ENCODE measurements at regions of chr4 and their contacts with region 1.

Region 1: DNA sequence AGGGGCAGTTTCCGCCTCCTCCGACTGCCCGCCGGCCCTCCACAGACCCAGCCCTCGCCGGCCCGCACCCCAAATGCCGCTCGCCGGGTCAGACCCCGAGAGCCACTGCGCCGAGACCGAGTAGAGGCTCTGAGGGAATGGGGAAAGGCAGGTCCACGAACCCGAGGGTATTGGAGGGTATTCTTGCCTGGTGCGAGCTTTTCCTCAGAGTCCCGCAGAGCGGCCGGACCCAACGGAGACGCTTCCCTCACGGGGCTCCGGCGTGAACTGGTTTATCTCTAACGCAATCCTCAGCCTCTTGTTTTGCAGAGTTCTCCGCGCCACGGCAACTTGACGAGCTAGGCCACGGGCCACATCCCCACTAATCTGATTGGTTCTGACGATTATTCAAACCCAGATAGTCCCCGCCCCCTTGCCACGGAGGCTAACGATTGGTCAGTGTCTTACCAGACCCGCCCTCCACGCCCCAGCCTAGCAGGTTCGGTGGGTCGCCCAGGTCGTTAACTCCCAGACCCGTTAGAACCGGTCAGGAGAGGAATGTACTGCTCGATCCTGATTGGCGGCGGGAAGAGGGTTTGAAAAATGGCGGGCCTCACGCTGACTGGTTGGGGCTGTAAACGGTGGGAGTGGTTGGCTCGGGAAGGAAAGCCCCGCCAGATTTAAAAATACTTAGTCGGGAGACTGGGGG is at the start of gene HMGB2:
- DNase-seq: peak; percentile 98 to 100 (median 100)
- H3K4me3 ChIP-seq: peak within 1 kb of the TSS; percentile 92 to 95
- H3K4me3 Mint-ChIP-seq: peak within 1 kb of the TSS; percentile 97 to 100 (median 98)
- H3K27ac ChIP-seq: peak within 1 kb of the TSS; percentile 91
- H3K27ac Mint-ChIP-seq: peak within 1 kb of the TSS; percentile 95 to 99 (median 98)
- H3K4me1 ChIP-seq: peaks cover 26% of the 10 kb centered on the region
- H3K4me1 Mint-ChIP-seq: peaks cover 17 to 33% (median 21%) of the 10 kb centered on the region in 4 donors
- H3K27me3 ChIP-seq: no peaks in the 10 kb centered on the region
- H3K27me3 Mint-ChIP-seq: peaks cover 0 to 2% of the 10 kb centered on the region in 2 donors
- total RNA-seq, gene HMGB2: 110 to 116 TPM

Region 2: DNA sequence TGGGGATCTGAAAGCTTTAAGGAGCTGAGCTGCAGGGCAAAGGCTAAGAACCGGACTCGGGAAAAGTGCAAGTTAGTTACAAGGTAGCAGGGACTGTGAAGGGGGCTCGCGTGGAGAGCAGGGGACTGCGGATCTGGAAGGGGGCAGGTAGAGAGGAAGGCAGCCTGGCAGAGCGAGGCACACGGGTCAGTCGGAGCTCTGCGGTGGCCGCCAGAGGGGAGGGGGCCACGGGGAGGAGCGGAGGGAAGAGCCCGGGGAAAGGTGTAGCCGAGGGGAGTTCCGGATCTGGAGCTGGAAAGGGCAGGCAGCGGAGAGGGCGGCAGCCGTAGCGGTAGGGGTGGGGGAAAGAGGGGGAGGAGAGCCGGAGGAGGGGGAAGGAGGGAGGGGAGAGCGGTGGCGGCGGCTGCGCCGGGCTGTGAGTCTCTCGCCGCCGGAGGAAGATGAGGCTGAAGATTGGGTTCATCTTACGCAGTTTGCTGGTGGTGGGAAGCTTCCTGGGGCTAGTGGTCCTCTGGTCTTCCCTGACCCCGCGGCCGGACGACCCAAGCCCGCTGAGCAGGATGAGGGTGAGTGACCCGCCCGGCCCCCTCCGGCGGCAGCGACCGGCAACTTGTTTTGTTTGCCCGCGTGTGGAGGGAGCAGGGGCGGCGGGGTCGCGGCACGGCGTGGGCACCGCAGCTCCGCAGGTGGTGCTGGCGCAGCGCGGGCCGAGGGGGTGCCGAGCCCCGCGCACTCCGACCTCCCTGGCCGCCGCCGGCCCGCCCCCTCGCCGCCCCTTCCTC is 165.6 kb before region 1 on chr4 and contains the start of gene GALNT7:
- CTCF ChIA-PET with region 1: no interaction called
- POLR2A ChIA-PET with region 1: interaction called, 27 read pairs
- intact Hi-C with region 1: loop called (anchors 2 kb)
- DNase-seq: peak; percentile 52 to 78 (median 54)
- H3K4me3 ChIP-seq: peak within 1 kb of the TSS; percentile 66 to 78
- H3K4me3 Mint-ChIP-seq: peak within 1 kb of the TSS; percentile 95 to 99 (median 98)
- H3K27ac ChIP-seq: peak within 1 kb of the TSS; percentile 58
- H3K27ac Mint-ChIP-seq: peak within 1 kb of the TSS; percentile 63 to 95 (median 89)
- H3K4me1 ChIP-seq: peaks cover 26% of the 10 kb centered on the region
- H3K4me1 Mint-ChIP-seq: peaks cover 32 to 48% (median 40%) of the 10 kb centered on the region in 4 donors
- H3K27me3 ChIP-seq: no peaks in the 10 kb centered on the region
- H3K27me3 Mint-ChIP-seq: no peaks in the 10 kb centered on the region
- total RNA-seq, gene GALNT7: 24.1 to 26.3 TPM

Region 3: DNA sequence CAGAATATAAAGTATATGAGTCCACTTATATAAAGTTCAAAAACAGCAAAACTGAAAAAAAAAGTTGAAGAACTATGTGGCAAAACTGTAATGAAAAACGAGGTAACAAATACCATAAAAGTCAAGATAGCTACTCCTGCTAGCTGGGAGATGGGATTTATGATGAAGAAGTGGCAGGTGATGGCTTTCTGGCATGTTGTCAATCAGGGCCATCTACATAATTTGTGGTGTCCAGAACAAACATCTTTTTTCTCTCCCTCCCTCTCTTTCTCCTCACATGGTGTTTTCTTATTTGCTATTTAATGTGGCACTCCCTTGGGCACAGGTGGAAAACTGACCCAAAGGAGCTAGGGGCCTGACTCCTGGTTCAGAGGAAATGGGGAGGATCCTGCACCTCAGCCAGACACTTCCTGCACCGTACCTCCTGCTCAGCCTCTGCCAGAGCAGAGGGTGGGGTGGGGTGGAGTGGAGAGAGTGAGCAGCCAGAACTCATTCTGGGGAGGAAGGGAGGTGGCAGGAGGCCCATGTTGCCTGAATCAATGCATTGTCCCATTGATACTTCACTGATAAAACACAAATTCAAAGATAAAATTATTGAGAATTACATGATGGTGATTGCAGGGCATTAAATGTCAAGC is 31.2 kb after region 1 on chr4:
- CTCF ChIA-PET with region 1: interaction called, 72 read pairs
- POLR2A ChIA-PET with region 1: interaction called, 375 read pairs
- intact Hi-C with region 1: loop called (anchors 1 kb)
- DNase-seq: no peak
- H3K4me3 ChIP-seq: no peak overlapping the region
- H3K4me3 Mint-ChIP-seq: peak overlapping the region in 2 of 8 donors; percentile 51 to 53
- H3K27ac ChIP-seq: no peak overlapping the region
- H3K27ac Mint-ChIP-seq: peak overlapping the region in 5 of 7 donors; percentile 33 to 84 (median 70)
- H3K4me1 ChIP-seq: peaks cover 35% of the 10 kb centered on the region
- H3K4me1 Mint-ChIP-seq: peaks cover 16 to 32% (median 24%) of the 10 kb centered on the region in 4 donors
- H3K27me3 ChIP-seq: no peaks in the 10 kb centered on the region
- H3K27me3 Mint-ChIP-seq: no peaks in the 10 kb centered on the region

Region 4: GRCh38 chr4:173494013-173494970 is 160.1 kb after region 1 on chr4:
- CTCF ChIA-PET with region 1: interaction called, 3 read pairs
- POLR2A ChIA-PET with region 1: interaction called, 4 read pairs
- intact Hi-C with region 1: loop called (anchors 5 kb)
- DNase-seq: peak; percentile 60 to 71 (median 66)
- H3K4me3 ChIP-seq: peak overlapping the region; percentile 46 to 54
- H3K4me3 Mint-ChIP-seq: peak overlapping the region; percentile 85 to 94 (median 88)
- H3K27ac ChIP-seq: no peak overlapping the region
- H3K27ac Mint-ChIP-seq: peak overlapping the region in 3 of 7 donors; percentile 19 to 66 (median 32)
- H3K4me1 ChIP-seq: peaks cover 11% of the 10 kb centered on the region
- H3K4me1 Mint-ChIP-seq: peaks cover 11 to 28% (median 18%) of the 10 kb centered on the region in 4 donors
- H3K27me3 ChIP-seq: no peaks in the 10 kb centered on the region
- H3K27me3 Mint-ChIP-seq: peaks cover 15 to 19% of the 10 kb centered on the region in 2 donors

Region 5: GRCh38 chr4:173827707-173828106 is 493.5 kb after region 1 on chr4:
- CTCF ChIA-PET with region 1: no interaction called
- POLR2A ChIA-PET with region 1: no interaction called
- intact Hi-C with region 1: no loop called
- DNase-seq: no peak
- H3K4me3 ChIP-seq: no peak overlapping the region
- H3K4me3 Mint-ChIP-seq: no peak overlapping the region
- H3K27ac ChIP-seq: no peak overlapping the region
- H3K27ac Mint-ChIP-seq: no peak overlapping the region
- H3K4me1 ChIP-seq: no peaks in the 10 kb centered on the region
- H3K4me1 Mint-ChIP-seq: no peaks in the 10 kb centered on the region
- H3K27me3 ChIP-seq: no peaks in the 10 kb centered on the region
- H3K27me3 Mint-ChIP-seq: no peaks in the 10 kb centered on the region

Region 6: DNA sequence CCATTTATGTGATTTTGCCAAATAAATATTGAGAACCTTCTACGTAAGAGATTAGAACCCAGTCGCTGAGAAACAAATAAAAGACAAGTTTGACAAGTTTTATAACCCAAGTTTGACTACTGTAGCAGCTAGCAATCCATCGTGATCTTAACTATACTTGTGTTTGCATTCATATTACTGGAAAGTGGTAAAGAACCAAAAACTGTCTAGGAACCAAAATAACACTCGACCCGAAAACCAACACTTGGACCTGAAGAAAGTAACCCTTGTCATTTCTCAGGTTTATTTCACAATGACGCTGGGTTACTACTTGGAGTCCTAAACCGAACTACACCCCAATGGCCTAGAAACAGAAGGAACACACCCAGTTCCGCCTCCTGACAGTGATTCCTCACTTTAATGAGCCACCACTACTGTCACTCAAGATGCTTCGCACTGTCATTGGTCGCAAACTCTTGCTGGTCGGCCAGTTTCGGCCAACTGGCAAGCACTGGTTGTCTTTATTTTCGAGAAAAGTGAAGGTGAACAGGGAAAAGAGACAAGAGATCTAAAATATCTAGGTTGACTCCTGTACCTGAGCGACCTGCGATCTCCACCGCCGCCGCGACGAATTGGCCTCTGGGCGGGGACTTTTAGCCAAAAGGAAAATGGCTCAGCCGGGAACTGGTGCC is 948.7 kb after region 1 on chr4:
- CTCF ChIA-PET with region 1: no interaction called
- POLR2A ChIA-PET with region 1: interaction called, 9 read pairs
- intact Hi-C with region 1: loop called (anchors 1 kb)
- DNase-seq: peak; percentile 84 to 92 (median 86)
- H3K4me3 ChIP-seq: peak overlapping the region; percentile 71 to 92
- H3K4me3 Mint-ChIP-seq: peak overlapping the region; percentile 96 to 100 (median 99)
- H3K27ac ChIP-seq: peak overlapping the region; percentile 97
- H3K27ac Mint-ChIP-seq: peak overlapping the region; percentile 98 to 100 (median 100)
- H3K4me1 ChIP-seq: peaks cover 59% of the 10 kb centered on the region
- H3K4me1 Mint-ChIP-seq: peaks cover 44 to 80% (median 61%) of the 10 kb centered on the region in 4 donors
- H3K27me3 ChIP-seq: no peaks in the 10 kb centered on the region
- H3K27me3 Mint-ChIP-seq: no peaks in the 10 kb centered on the region

Measured in CD4-positive, alpha-beta memory T cell (primary cell).